ENCODE measurements at regions of chr20 and their contacts with region 1.

Region 1: DNA sequence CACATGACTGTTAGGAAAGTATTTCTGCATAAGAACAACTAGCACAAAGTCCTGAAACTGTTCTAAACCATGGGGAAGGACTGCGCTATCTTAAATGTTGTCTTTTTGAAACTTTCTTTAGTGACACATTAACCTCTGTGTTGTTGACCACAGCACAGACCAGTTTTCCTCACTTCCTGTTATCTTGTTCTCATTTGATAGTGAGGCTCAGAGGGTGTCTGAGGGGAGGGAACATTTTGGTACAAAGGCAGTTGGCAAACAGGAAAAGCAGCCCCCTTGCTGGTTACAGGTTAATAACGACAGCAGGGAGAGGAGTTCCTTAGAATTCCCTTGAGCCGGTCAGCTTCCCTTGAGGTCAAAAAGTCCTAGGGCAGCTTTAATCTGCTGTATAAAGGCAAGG is 143.5 kb upstream of the BMP2 start:
- DNase-seq: no peak
- H3K4me3 ChIP-seq: no peak overlapping the region
- H3K27ac ChIP-seq: no peak overlapping the region
- H3K4me1 ChIP-seq: peaks cover 0 to 3% (median 0%) of the 10 kb centered on the region in 4 experiments; a peak in 1 of 7 replicates
- H3K27me3 ChIP-seq: no peaks in the 10 kb centered on the region
- CTCF ChIP-seq: no peak
- EP300 ChIP-seq: no peak
- POLR2A ChIP-seq: no peak
- RAD21 ChIP-seq: no peak

Region 2: GRCh38 chr20:6599876-6600735 is 23.9 kb before region 1 on chr20:
- CTCF ChIA-PET with region 1: interaction called, 11 read pairs
- POLR2A ChIA-PET with region 1: no interaction called
- DNase-seq: no peak
- H3K4me3 ChIP-seq: no peak overlapping the region
- H3K27ac ChIP-seq: no peak overlapping the region
- H3K4me1 ChIP-seq: no peaks in the 10 kb centered on the region
- H3K27me3 ChIP-seq: no peaks in the 10 kb centered on the region
- CTCF ChIP-seq: no peak
- EP300 ChIP-seq: no peak
- POLR2A ChIP-seq: no peak
- RAD21 ChIP-seq: no peak

Region 3: DNA sequence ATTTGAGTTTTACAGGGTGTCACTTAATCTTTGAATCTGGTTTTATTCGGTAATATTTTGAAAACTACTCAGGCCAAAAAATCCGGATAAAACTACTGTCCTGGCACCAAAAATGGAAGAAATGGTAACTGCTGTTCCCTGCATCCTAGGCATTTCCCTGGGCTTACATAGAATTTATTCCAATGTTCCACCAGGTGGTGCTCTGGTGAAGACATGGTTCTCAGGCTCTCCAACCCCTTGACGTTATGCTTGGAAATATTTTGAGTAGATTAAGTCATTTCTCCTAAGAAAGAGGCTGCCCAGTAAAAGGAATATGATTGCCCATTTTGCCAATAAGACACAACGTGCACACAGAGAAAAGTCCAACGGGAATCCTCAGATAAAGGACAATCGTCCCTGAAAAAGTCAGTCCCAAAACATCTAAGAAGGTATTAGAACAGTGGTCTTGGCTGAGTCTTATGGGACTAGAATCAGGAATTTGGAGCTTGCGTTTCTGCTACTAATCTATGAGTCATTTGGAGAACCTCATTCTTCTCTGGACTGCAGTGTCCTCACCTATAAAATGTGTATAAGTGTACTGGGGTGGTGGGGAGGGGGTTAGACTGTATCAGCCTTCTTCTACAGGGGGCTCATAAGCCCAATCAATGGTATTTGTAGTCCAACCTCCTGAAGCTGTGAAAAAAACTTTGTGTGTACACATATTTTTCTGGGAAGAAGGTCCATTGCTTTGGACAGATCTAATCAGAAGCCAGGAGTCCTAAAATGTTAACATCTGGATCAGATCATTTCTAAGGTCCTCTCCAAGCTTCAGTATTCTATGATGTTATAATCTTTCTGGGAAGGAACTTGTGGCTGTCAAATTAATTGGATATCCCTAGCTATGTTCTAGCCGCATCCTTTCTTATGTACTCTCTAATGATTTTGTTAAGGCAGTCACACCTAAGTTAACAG is 12.5 kb after region 1 on chr20:
- CTCF ChIA-PET with region 1: interaction called, 15 read pairs
- POLR2A ChIA-PET with region 1: no interaction called
- DNase-seq: no peak
- H3K4me3 ChIP-seq: no peak overlapping the region
- H3K27ac ChIP-seq: no peak overlapping the region
- H3K4me1 ChIP-seq: peaks cover 0 to 4% (median 1%) of the 10 kb centered on the region in 4 experiments; a peak in 2 of 7 replicates
- H3K27me3 ChIP-seq: no peaks in the 10 kb centered on the region
- CTCF ChIP-seq: peak in 2 of 3 experiments; percentile 55 to 66; a peak in 3 of 4 replicates
- EP300 ChIP-seq: no peak
- POLR2A ChIP-seq: no peak
- RAD21 ChIP-seq: peak; percentile 72 to 74

Region 4: GRCh38 chr20:6662309-6662708 is 38.3 kb after region 1 on chr20:
- CTCF ChIA-PET with region 1: no interaction called
- POLR2A ChIA-PET with region 1: no interaction called
- DNase-seq: no peak
- H3K4me3 ChIP-seq: no peak overlapping the region
- H3K27ac ChIP-seq: no peak overlapping the region
- H3K4me1 ChIP-seq: 0 out of 7 replicates have a peak, but pooled peaks cover 0 to 5% (median 0%) of the 10 kb centered on the region in 4 experiments
- H3K27me3 ChIP-seq: no peaks in the 10 kb centered on the region
- CTCF ChIP-seq: no peak
- EP300 ChIP-seq: no peak
- POLR2A ChIP-seq: no peak
- RAD21 ChIP-seq: no peak

Region 5: GRCh38 chr20:6819605-6820004 is 195.6 kb after region 1 on chr20:
- CTCF ChIA-PET with region 1: interaction called, 16 read pairs
- POLR2A ChIA-PET with region 1: no interaction called
- DNase-seq: no peak
- H3K4me3 ChIP-seq: no peak overlapping the region
- H3K27ac ChIP-seq: no peak overlapping the region
- H3K4me1 ChIP-seq: peaks cover 0 to 7% (median under 1%) of the 10 kb centered on the region in 4 experiments; a peak in 3 of 7 replicates
- H3K27me3 ChIP-seq: no peaks in the 10 kb centered on the region
- CTCF ChIP-seq: peak in 2 of 3 experiments; percentile 26 to 29; a peak in 2 of 4 replicates
- EP300 ChIP-seq: no peak
- POLR2A ChIP-seq: no peak
- RAD21 ChIP-seq: peak; percentile 57 to 69

Measured in H1 (cell line).